Adrenal gland (tissue), 19 donors: ENCODE measurements at regions of chr11 and their contacts with region 1.

Region 1: GRCh38 chr11:1401656-1402221 is 12.0 kb downstream of the BRSK2 start:
- DNase-seq: peak; percentile 69 to 80 (median 72)
- H3K4me3 ChIP-seq: no peak overlapping the region
- H3K27ac ChIP-seq: no peak overlapping the region
- H3K4me1 ChIP-seq: no peaks in the 10 kb centered on the region
- H3K27me3 ChIP-seq: no peaks in the 10 kb centered on the region
- CTCF ChIP-seq: no peak
- POLR2A ChIP-seq: no peak

Region 2: GRCh38 chr11:1335811-1336761 is 65.7 kb before region 1 on chr11:
- intact Hi-C with region 1: no loop called
- DNase-seq: peak; percentile 49 to 86 (median 78)
- H3K4me3 ChIP-seq: peak overlapping the region in 1 of 4 donors; percentile 56
- H3K27ac ChIP-seq: peak overlapping the region in 3 of 5 donors; percentile 2 to 90 (median 44)
- H3K4me1 ChIP-seq: peaks cover 11 to 12% of the 10 kb centered on the region in 2 donors
- H3K27me3 ChIP-seq: no peaks in the 10 kb centered on the region
- CTCF ChIP-seq: no peak
- POLR2A ChIP-seq: no peak

Region 3: DNA sequence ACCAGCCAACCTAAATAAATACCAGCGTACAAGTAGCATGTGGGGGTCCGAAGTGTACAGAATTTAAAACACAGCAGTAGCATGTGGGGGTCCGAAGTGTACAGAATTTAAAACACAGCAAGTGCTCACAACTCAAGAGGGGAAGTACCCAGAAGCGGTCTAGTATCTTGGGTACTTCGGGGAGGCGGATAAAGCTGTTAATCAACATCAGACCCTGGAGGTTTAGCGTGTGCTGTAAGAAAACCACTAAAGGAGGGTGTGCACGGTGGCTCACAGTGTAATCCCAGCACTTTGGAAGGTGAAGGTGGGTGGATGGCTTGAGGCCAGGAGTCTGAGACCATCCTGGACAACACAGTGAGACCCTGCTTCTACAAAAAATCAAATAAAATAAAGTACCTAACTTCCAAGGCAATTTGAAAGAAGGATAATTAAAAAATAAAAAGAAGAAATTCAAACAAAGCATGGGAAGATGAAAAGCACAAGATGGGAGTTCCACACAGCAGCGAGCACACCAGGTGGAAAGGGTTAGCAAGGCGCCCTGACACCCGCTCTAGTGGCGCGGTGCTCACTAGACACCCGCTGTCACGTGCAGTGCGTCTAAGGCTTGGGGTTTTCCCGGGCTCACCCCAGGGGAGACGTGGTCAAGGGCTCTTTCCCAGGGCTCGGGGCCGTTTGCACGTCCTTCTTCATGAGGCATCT is 119.8 kb after region 1 on chr11:
- intact Hi-C with region 1: loop called in 1 of 2 experiments (anchors 10 kb)
- DNase-seq: no peak
- H3K4me3 ChIP-seq: no peak overlapping the region
- H3K27ac ChIP-seq: no peak overlapping the region
- H3K4me1 ChIP-seq: peaks cover 6 to 14% of the 10 kb centered on the region in 2 donors
- H3K27me3 ChIP-seq: no peaks in the 10 kb centered on the region
- CTCF ChIP-seq: no peak
- POLR2A ChIP-seq: no peak